ENCODE measurements at regions of chr5 and their contacts with region 1.

Region 1: DNA sequence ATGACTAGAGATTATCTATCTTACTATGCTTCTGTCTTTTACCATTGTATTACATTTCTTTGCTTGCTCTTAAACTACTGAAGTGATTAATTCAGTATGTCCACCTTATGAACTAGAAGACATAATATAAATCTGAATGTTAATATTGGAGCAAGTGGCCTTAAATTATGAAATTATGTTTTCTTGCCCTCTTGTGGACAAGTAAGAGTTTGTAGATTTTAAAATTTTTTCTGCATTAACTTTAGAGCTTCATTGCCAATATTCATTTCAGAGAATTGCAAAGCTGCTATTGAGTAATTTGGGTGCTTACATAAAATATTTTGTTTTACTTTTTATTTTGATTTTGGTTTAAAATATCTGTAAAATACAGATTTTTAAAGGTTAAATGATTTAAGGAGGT is 55.3 kb downstream of the RANBP17 start:
- DNase-seq: no peak
- ATAC-seq: no peak
- H3K4me3 ChIP-seq: no peak overlapping the region
- H3K27ac ChIP-seq: no peak overlapping the region
- H3K4me1 ChIP-seq: no peaks in the 10 kb centered on the region
- H3K27me3 ChIP-seq: no peaks in the 10 kb centered on the region
- CTCF ChIP-seq: peak in 2 of 3 experiments; percentile 17 to 28; a peak in 2 of 6 replicates
- POLR2A ChIP-seq: no peak
- RAD21 ChIP-seq: peak; percentile 30

Region 2: DNA sequence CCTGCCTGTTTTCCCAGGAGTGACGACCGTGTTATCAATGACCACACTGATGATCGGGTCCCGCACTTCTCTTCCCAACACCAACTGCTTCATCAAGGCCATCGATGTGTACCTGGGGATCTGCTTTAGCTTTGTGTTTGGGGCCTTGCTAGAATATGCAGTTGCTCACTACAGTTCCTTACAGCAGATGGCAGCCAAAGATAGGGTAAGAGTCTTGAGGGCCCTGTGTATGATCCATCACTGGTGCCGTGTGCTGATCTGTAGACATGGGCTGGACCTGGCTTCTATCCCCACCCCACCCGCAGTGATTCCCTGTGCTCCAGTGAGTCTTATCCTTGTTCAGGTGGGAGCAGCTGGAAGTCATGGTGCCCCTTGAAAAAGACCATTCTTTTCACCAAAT is 107.6 kb before region 1 on chr5:
- CTCF ChIA-PET with region 1: no interaction called
- POLR2A ChIA-PET with region 1: no interaction called
- RAD21 ChIA-PET with region 1: no interaction called
- intact Hi-C with region 1: loop called (anchors 5 kb)
- DNase-seq: peak; percentile 34
- ATAC-seq: peak; percentile 90
- H3K4me3 ChIP-seq: no peak overlapping the region
- H3K27ac ChIP-seq: no peak overlapping the region
- H3K4me1 ChIP-seq: no peaks in the 10 kb centered on the region
- H3K27me3 ChIP-seq: no peaks in the 10 kb centered on the region
- CTCF ChIP-seq: peak in 2 of 3 experiments; percentile 39 to 51; a peak in 3 of 6 replicates
- POLR2A ChIP-seq: no peak
- RAD21 ChIP-seq: peak; percentile 78

Region 3: GRCh38 chr5:170903075-170903474 is 14.0 kb before region 1 on chr5:
- CTCF ChIA-PET with region 1: no interaction called
- POLR2A ChIA-PET with region 1: no interaction called
- RAD21 ChIA-PET with region 1: no interaction called
- intact Hi-C with region 1: no loop called
- DNase-seq: no peak
- ATAC-seq: no peak
- H3K4me3 ChIP-seq: no peak overlapping the region
- H3K27ac ChIP-seq: no peak overlapping the region
- H3K4me1 ChIP-seq: no peaks in the 10 kb centered on the region; a peak in 1 of 4 replicates
- H3K27me3 ChIP-seq: no peaks in the 10 kb centered on the region
- CTCF ChIP-seq: no peak
- POLR2A ChIP-seq: no peak
- RAD21 ChIP-seq: no peak

Measured in HCT116 (cell line).